Activated naive CD4-positive, alpha-beta T cell treated with anti-CD3 and anti-CD28 coated beads for 36 hours (primary cell): ENCODE measurements at regions of chr4 and their contacts with region 1.

Region 1: DNA sequence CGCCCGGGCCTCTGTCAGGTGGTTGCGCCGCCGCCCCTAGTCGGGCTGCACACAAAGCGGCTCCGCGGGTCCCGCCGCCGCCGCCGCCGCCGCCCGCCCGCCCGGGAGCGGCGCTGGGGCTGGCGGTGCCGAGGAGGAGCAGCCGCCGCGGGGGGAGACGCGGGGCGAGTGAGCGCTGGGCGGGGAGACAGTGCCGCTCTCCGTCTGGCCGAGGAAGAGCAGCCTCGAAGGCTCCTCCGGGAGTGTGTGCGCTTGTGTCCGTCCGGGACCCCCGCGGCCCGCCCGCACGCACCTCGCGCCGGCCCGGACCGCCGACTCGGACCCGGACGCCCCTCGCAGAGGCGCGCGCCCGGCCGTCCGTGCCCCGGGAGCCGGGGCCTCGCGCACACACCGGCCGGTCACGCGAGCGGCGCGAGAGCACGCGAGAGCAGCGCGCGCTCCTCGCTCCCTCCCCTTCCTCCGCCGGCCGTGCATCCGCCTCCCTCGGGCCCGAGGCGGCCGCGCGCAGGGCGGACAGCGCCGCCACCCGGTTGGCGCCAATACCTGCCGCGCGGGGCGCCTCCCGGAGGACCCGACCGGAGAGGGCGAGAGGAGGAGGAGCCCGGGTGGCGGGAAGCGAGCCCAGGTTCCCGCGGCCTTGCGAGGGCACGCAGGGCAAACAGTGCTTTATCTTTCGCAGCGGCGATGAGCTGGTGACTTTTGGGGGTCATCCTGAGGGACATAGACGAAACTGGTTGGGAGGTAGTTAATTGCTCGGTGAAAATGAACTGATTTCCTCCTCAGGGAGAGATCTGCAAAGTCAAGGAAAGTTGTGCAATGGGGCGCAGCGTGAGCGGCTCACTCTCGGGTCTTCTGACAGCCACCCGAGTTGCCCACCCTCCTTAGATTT is at the start of gene PDS5A:
- DNase-seq: peak; percentile 91
- H3K4me3 Mint-ChIP-seq: peak within 1 kb of the TSS; percentile 93
- H3K27ac Mint-ChIP-seq: peak within 1 kb of the TSS; percentile 96
- H3K4me1 Mint-ChIP-seq: peaks cover 33% of the 10 kb centered on the region
- H3K27me3 Mint-ChIP-seq: no peaks in the 10 kb centered on the region
- total RNA-seq, gene PDS5A: 86.8 to 89.1 TPM

Region 2: GRCh38 chr4:38902695-38903094 is 1075.0 kb before region 1 on chr4:
- CTCF ChIA-PET with region 1: no interaction called
- intact Hi-C with region 1: loop called (anchors 2 kb)
- DNase-seq: no peak
- H3K4me3 Mint-ChIP-seq: no peak overlapping the region
- H3K27ac Mint-ChIP-seq: no peak overlapping the region
- H3K4me1 Mint-ChIP-seq: peaks cover 5% of the 10 kb centered on the region
- H3K27me3 Mint-ChIP-seq: peaks cover 3% of the 10 kb centered on the region

Region 3: DNA sequence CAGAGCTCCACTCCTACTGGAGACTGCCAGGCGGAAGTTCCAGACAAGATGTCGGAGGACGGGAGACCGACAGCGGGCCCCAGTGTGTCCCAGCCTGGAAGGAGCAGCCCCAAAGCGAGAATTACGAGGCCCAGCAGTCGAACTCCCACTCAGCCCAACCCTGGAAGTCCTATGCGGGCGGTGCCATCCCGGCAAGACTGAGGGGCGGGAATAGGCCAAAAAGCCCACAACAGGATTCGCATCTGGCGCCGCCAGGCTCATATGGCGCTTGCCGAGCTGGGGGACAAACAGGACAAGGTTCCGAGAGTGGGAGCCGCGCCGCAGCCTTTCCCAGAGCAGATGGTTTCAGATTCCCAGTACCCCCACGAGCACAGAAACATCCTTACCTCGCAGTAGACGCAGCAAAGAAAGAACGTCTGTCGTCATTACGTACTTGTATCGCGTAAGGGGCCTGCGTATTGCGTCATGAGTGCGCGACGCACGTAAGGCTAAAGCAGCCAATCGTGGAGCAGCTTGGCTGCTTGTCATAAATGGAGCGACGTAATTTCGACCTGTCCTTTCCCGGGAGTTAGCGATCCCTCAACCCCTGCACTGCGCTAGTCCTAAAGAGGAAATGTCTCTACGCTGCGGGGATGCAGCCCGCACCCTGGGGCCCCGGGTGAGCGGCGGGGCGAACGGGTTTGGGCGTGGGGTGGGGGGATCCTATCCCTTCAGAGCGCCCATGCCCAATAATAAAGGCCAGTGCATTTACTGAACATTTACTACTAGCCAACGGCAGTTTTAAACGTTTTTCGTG is 519.0 kb before region 1 on chr4 and contains the starts of genes LIAS and RPL9:
- CTCF ChIA-PET with region 1: interaction called, 4 read pairs
- intact Hi-C with region 1: loop called (anchors 2 kb)
- DNase-seq: peak; percentile 95
- H3K4me3 Mint-ChIP-seq: peak within 1 kb of the TSS; percentile 91
- H3K27ac Mint-ChIP-seq: peak within 1 kb of the TSS; percentile 98
- H3K4me1 Mint-ChIP-seq: peaks cover 48% of the 10 kb centered on the region
- H3K27me3 Mint-ChIP-seq: no peaks in the 10 kb centered on the region
- total RNA-seq, gene LIAS: 30.9 to 31.7 TPM
- total RNA-seq, gene RPL9: 2,383 to 2,428 TPM

Region 4: DNA sequence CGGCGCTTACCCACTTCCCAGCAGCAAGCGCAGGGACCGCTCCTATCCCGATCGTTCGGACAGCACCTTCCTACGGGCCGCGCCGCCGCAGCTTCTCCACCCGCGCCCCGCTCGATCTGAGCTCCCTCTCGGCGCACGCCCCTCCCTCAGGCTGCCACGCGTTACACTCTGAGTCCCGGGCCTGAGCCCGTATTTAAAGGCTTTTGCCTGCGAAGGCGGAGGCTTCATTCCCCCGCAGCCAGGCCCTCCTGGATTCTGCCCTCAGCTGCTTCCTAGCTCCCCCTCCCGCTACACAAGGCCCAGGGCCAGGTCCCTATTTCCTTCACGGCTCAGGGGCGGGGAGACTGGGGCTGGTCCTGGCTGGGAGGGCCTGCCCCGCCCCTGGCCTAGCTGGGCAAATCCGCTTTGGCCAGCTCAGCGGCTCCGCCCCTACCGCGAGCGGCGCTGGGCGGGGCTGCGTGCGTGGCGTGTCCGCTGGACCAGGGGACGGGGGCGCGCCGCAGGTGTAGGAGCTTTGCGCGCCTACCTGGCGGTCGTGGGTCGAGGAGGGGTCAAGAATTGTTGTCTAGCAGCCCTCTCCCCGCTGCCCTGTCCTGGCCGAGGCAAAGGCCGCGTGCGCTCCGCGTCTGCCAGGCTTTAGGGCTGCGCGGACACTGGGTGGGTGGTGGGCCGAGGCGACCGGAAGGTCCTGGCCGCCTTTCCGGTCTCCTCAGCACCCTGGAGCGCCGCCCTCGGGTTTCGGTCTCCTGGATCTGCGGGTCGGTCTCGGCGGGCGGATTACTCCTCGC is 450.3 kb before region 1 on chr4 and contains the start of gene UGDH:
- CTCF ChIA-PET with region 1: interaction called, 3 read pairs
- intact Hi-C with region 1: loop called (anchors 1 kb)
- DNase-seq: peak; percentile 91
- H3K4me3 Mint-ChIP-seq: peak within 1 kb of the TSS; percentile 97
- H3K27ac Mint-ChIP-seq: peak within 1 kb of the TSS; percentile 81
- H3K4me1 Mint-ChIP-seq: peaks cover 18% of the 10 kb centered on the region
- H3K27me3 Mint-ChIP-seq: no peaks in the 10 kb centered on the region
- total RNA-seq, gene UGDH: 11.7 to 14.6 TPM

Region 5: GRCh38 chr4:39697740-39698423 is 279.9 kb before region 1 on chr4 and contains the start of gene UBE2K:
- CTCF ChIA-PET with region 1: interaction called, 6 read pairs
- intact Hi-C with region 1: loop called (anchors 1 kb)
- DNase-seq: peak; percentile 85
- H3K4me3 Mint-ChIP-seq: peak within 1 kb of the TSS; percentile 98
- H3K27ac Mint-ChIP-seq: peak within 1 kb of the TSS; percentile 98
- H3K4me1 Mint-ChIP-seq: peaks cover 32% of the 10 kb centered on the region
- H3K27me3 Mint-ChIP-seq: no peaks in the 10 kb centered on the region
- total RNA-seq, gene UBE2K: 60.6 to 69.5 TPM

Region 6: GRCh38 chr4:39931441-39931901 is 46.3 kb before region 1 on chr4:
- CTCF ChIA-PET with region 1: interaction called, 4 read pairs
- intact Hi-C with region 1: loop called (anchors 2 kb)
- DNase-seq: peak; percentile 31
- H3K4me3 Mint-ChIP-seq: no peak overlapping the region
- H3K27ac Mint-ChIP-seq: peak overlapping the region; percentile 42
- H3K4me1 Mint-ChIP-seq: peaks cover 50% of the 10 kb centered on the region
- H3K27me3 Mint-ChIP-seq: no peaks in the 10 kb centered on the region